GM10248 (cell line): ENCODE measurements at regions of chr5 and their contacts with region 1.

Region 1: DNA sequence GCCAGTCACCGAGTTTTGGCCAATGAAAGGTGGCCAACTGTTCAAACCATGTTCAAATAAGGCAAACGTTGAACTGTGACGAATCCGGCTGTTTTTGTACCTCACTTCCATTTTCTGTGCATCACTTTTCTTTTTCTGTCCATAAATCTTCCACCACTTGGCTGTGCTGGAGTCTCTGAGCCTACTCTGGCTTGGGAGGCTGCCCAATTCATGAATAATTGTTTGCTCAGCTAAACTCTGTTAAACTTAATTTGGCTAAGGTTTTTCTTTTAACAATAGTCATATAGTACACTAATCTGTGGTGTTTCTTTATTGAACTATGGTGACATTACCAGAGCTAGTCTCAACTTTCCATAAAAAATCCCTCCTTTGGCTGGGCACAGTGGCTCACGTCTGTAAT is 11.3 kb downstream of the NIM1K start:
- DNase-seq: no peak
- CTCF ChIP-seq: no peak

Region 2: GRCh38 chr5:43179836-43180235 is 23.5 kb before region 1 on chr5:
- CTCF ChIA-PET with region 1: no interaction called
- POLR2A ChIA-PET with region 1: interaction called, 11 read pairs
- DNase-seq: no peak
- CTCF ChIP-seq: no peak

Region 3: DNA sequence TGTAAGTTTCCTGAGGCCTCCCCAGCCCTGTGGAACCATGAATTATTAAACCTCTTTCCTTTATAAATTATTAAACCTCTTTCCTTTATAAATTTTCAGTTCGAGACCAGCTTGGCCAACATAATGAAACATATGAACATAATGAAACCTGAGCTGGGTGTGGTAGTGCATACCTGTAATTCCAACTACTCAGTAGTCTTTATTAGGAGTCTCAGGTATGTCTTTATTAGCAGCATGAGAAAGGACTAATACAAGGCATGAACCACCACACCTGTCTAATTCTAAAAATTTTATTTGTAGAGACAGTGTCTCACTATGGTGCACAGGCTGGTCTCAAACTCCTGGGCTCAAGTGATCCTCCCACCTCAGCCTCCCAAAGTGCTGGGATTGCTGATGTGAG is 15.8 kb after region 1 on chr5:
- CTCF ChIA-PET with region 1: no interaction called
- POLR2A ChIA-PET with region 1: no interaction called
- DNase-seq: no peak
- CTCF ChIP-seq: no peak

Region 4: GRCh38 chr5:43256261-43256966 is 53.0 kb after region 1 on chr5:
- CTCF ChIA-PET with region 1: no interaction called
- POLR2A ChIA-PET with region 1: no interaction called
- DNase-seq: no peak
- CTCF ChIP-seq: no peak